ENCODE measurements at regions of chr5 and their contacts with region 1.

Region 1: DNA sequence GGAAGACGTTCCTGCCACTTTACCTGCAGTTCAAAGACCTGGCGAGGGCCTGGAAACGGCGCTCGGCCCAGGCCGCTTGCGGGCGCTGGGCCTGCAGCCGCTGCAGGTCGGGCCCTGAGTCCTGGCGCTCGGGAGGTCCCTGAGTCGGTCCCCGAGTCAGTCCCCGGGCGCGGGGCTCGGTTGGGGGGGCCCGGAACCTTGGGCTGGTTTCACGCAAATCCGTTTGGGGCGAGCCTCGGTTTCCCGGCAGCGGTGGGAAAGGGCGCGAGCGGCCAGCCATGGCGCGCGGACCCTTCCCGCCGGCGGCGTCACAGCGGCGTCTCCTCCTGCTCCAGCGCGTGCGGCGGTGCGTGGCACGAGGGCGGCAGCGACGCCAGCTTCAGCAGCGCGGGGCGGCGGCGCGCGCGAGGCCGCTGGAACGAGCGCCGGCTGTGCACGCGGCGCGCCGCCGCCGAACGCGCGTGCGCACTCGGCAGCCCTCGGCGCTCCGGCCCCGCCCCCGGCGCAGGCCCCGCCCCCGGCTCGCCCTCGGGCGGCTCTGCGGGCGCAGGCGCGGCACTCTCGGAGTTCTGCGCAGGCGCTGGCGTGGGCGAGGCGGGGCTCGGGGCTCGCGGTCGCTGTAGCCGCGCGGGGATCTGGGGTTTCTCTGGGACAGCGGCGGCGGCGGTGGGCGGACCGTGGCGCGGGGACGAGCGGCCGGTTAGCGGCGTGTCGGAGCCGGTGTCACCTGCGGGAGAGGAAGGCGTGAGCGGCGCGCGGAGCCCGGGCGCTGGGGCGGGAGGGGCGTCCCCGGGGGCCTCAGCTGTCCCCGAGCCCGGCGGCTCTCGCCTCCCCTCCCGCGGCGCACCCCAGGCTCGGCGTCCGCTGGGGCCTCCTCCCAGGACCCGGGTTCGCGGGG is 29.9 kb downstream of the EXOC3 start:
- DNase-seq: peak; percentile 50 to 94 (median 88)

Region 2: GRCh38 chr5:442335-443238 is 30.3 kb before region 1 on chr5 and contains the start of gene EXOC3:
- intact Hi-C with region 1: loop called (anchors 2 kb)
- DNase-seq: peak in 41 of 42 donors; percentile 40 to 89 (median 77)

Region 3: GRCh38 chr5:611721-612486 is 139.0 kb after region 1 on chr5 and contains the start of gene CEP72:
- intact Hi-C with region 1: loop called (anchors 5 kb)
- DNase-seq: peak; percentile 76 to 97 (median 94)

Region 4: GRCh38 chr5:892394-893136 is 419.7 kb after region 1 on chr5 and contains the starts of genes BRD9 and TRIP13:
- intact Hi-C with region 1: loop called (anchors 10 kb)
- DNase-seq: peak; percentile 40 to 94 (median 88)

Measured in head of caudate nucleus (tissue), 42 donors.